ENCODE measurements at regions of chr19 and their contacts with region 1.

Region 1: DNA sequence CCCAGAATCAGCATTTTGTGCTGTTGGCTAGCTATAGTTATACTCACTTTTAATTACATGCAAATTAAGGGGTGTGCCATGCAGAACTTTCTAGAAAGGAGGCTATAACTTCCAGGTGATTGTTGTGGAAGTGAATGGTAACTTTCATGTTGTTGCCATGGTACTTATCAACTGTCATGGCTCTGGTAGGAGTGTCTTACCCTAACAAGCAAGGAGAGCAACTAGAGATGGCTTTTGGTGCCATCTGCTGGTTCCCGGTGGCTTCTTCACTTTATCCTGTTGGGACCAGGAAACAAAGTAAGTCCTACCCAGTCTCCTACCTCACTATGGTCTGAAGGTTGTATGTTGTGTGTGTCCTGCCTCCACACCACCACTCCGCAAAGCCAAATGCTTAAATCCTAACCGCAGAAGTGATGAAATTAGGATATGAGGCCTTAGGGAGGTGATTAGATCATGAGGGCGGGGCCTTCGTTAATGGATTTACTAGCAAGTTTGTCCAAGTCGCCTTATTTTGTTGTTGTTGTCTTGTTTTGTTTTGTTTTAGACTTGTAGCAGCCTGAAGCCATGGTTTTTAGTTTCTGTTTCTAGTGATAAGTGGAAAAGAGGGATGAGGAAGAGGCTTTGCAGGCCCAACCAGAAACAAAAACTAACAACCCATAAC is 22.6 kb downstream of the FBXL12 start:
- DNase-seq: peak; percentile 81
- ATAC-seq: peak; percentile 28 to 46
- H3K4me3 ChIP-seq: no peak overlapping the region
- H3K27ac ChIP-seq: peak overlapping the region; percentile 15
- H3K4me1 ChIP-seq: no peaks in the 10 kb centered on the region
- H3K27me3 ChIP-seq: no peaks in the 10 kb centered on the region
- CTCF ChIP-seq: peak; percentile 81

Region 2: DNA sequence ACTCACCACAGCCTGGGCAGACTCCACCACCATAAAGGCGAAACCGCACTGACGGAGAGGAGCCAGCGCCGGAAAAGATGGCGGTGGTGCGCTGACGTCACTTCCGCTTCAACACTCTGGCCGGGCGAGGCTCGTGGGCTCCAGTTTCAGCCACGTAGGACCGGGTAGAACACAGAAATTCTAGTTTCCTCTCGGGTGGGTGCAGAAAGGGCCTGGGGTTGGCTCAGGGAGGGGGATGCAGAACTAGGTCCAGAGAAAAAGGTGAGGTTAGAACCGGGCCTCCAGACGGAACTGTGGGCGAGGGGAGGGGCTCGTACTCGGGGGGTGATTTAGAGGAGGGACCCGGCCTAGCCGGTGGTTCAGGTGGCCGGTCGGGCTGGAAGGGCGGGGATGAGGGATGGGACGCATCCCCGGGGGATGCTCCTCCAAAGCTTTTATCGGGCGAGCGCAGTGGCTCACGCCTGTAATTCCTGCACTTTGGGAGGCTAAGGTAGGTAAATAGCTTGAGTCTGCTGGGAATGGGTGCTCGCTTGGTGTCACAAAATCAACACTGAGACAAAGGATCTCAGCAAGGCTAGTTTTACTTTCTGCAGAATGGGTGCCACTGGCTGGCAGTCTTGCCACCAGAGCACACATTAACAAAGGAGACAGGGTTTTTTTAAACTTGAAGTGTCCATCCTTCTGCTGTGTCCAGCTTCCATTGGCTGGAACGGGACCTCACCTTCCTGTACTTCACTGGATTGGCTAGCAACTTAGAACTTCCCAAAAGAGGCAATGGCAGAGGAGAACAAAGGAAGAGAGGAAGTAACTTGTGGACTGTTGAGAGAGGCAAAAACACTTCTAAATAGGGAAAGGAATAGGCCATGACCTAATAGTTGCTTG is 174.8 kb before region 1 on chr19 and contains the start of gene ZNF561:
- intact Hi-C with region 1: loop called (anchors 10 kb)
- DNase-seq: peak; percentile 89
- ATAC-seq: peak; percentile 96 to 97
- H3K4me3 ChIP-seq: peak within 1 kb of the TSS; percentile 68
- H3K27ac ChIP-seq: peak within 1 kb of the TSS; percentile 89
- H3K4me1 ChIP-seq: peaks cover 21% of the 10 kb centered on the region
- H3K27me3 ChIP-seq: no peaks in the 10 kb centered on the region
- CTCF ChIP-seq: no peak
- total RNA-seq, gene ZNF561: 38.7 TPM

Region 3: GRCh38 chr19:9721861-9722260 is 74.4 kb before region 1 on chr19:
- intact Hi-C with region 1: no loop called
- DNase-seq: no peak
- ATAC-seq: no peak
- H3K4me3 ChIP-seq: no peak overlapping the region
- H3K27ac ChIP-seq: no peak overlapping the region
- H3K4me1 ChIP-seq: no peaks in the 10 kb centered on the region
- H3K27me3 ChIP-seq: no peaks in the 10 kb centered on the region
- CTCF ChIP-seq: no peak

Region 4: GRCh38 chr19:9865732-9866501 is 69.7 kb after region 1 on chr19:
- intact Hi-C with region 1: no loop called
- DNase-seq: no peak
- ATAC-seq: no peak
- H3K4me3 ChIP-seq: no peak overlapping the region
- H3K27ac ChIP-seq: no peak overlapping the region
- H3K4me1 ChIP-seq: no peaks in the 10 kb centered on the region
- H3K27me3 ChIP-seq: no peaks in the 10 kb centered on the region
- CTCF ChIP-seq: no peak

Measured in lower lobe of right lung (tissue), 2 donors.